ENCODE measurements at regions of chr13 and their contacts with region 1.

Region 1: DNA sequence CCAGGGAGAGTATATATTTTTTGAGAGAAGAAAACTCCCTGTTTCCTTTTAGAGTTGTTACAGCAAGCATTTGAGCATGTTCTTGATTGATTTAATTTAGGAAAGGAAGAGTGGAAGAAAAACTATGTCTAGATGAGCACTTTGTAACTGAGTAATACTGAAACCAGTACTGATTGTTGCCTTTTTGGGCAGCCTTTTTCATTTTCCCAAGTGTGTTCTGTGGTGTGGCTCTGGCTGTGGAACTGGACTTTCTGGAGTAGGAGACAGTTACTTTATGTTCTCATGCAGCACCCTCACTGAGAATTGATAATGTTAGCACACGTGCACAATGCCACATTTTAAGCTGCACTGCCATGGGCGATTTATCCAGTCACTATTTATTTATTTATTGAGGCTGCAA is 211.5 kb downstream of the LMO7 start:
- DNase-seq: no peak
- ATAC-seq: peak in 1 of 2 donors; percentile 41

Region 2: GRCh38 chr13:75530536-75530935 is 317.1 kb before region 1 on chr13:
- intact Hi-C with region 1: no loop called
- DNase-seq: no peak
- ATAC-seq: no peak

Region 3: DNA sequence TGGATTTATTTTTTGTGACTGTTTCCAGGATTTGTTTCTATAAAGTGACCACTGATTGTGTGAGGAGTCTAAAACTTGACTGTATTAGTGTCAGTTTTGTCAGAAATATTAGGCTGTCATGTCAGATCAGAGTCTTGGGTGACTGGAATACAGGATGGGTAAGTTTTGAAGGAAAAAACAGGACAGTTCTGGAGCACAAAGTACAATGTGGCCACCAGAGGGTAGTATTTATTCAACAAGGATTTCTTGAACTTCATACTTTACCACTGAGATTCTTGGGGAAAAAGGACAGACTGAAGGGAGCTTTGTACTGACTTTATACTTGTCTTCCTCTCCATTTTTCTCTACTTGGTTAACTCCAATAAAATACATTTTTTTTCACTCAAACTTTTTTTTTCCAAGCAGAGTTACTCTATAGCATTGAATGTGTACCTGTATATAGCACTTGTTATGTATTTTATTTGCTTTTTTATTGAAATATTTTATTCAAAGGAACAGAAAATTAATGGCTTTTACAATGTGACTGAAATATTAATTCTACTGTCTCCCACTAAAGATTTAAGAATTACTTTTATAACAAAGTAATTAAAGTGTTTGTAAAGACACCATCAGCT is 160.3 kb before region 1 on chr13:
- intact Hi-C with region 1: loop called in 1 of 2 experiments (anchors 10 kb)
- DNase-seq: no peak
- ATAC-seq: peak in 1 of 2 donors; percentile 57